PC-3 (cell line): ENCODE measurements at regions of chr6 and their contacts with region 1.

Region 1: GRCh38 chr6:55980627-55981211 is 105.3 kb upstream of the BMP5 start:
- DNase-seq: peak; percentile 72
- ATAC-seq: no peak
- H3K4me3 ChIP-seq: no peak overlapping the region
- H3K27ac ChIP-seq: no peak overlapping the region
- H3K4me1 ChIP-seq: no peaks in the 10 kb centered on the region
- H3K27me3 ChIP-seq: no peaks in the 10 kb centered on the region
- CTCF ChIP-seq: peak; percentile 89

Region 2: GRCh38 chr6:56144538-56145324 is 164.0 kb after region 1 on chr6:
- CTCF ChIA-PET with region 1: no interaction called
- POLR2A ChIA-PET with region 1: interaction called, 32 read pairs
- intact Hi-C with region 1: no loop called
- DNase-seq: peak; percentile 85
- ATAC-seq: peak; percentile 93
- H3K4me3 ChIP-seq: peak overlapping the region; percentile 25; the same call in 1 of the 2 replicates
- H3K27ac ChIP-seq: peak overlapping the region; percentile 83
- H3K4me1 ChIP-seq: peaks cover 25% of the 10 kb centered on the region
- H3K27me3 ChIP-seq: no peaks in the 10 kb centered on the region
- CTCF ChIP-seq: no peak

Region 3: DNA sequence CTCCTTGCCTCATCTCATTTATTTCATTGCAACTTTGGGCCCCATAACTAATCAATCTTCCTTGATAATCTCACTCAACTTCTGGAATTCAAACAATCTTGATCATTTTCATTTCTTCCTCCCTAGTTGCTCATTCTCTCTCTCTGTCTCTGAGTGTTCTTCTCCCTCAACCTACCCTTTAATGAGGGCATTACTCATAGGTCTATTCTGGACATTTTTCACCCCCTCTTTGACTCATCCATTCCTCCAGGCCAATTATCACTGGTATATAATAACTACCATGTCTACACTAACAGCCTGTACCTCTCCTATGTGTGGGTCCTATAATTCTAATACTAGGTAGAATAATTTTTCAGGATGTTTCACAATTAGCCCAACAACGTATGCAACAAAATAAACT is 187.9 kb after region 1 on chr6:
- CTCF ChIA-PET with region 1: no interaction called
- POLR2A ChIA-PET with region 1: no interaction called
- intact Hi-C with region 1: loop called (anchors 10 kb)
- DNase-seq: peak; percentile 36
- ATAC-seq: peak; percentile 29
- H3K4me3 ChIP-seq: no peak overlapping the region
- H3K27ac ChIP-seq: peak overlapping the region; percentile 52
- H3K4me1 ChIP-seq: peaks cover 12% of the 10 kb centered on the region
- H3K27me3 ChIP-seq: no peaks in the 10 kb centered on the region
- CTCF ChIP-seq: no peak